ENCODE measurements at regions of chr6 and their contacts with region 1.

Region 1: GRCh38 chr6:79078075-79079025 is at the start of gene PHIP:
- DNase-seq: peak; percentile 85 to 97 (median 91)
- ATAC-seq: peak; percentile 82
- H3K4me3 ChIP-seq: peak within 1 kb of the TSS; percentile 80
- H3K4me3 Mint-ChIP-seq: peak within 1 kb of the TSS; percentile 95
- H3K27ac ChIP-seq: peak within 1 kb of the TSS; percentile 93 to 98
- H3K27ac Mint-ChIP-seq: peak within 1 kb of the TSS; percentile 98
- H3K4me1 ChIP-seq: peaks cover 2% of the 10 kb centered on the region
- H3K4me1 Mint-ChIP-seq: peaks cover 53% of the 10 kb centered on the region
- H3K27me3 ChIP-seq: peaks cover 0 to 5% of the 10 kb centered on the region in 2 experiments
- H3K27me3 Mint-ChIP-seq: peaks cover 8% of the 10 kb centered on the region
- CTCF ChIP-seq: no peak
- total RNA-seq, gene PHIP: 35.7 to 36.9 TPM

Region 2: GRCh38 chr6:77535172-77535571 is 1543.2 kb before region 1 on chr6:
- CTCF ChIA-PET with region 1: no interaction called
- POLR2A ChIA-PET with region 1: no interaction called
- intact Hi-C with region 1: no loop called
- DNase-seq: no peak
- ATAC-seq: no peak
- H3K4me3 ChIP-seq: no peak overlapping the region
- H3K4me3 Mint-ChIP-seq: no peak overlapping the region
- H3K27ac ChIP-seq: no peak overlapping the region
- H3K27ac Mint-ChIP-seq: no peak overlapping the region
- H3K4me1 ChIP-seq: no peaks in the 10 kb centered on the region
- H3K4me1 Mint-ChIP-seq: no peaks in the 10 kb centered on the region
- H3K27me3 ChIP-seq: no peaks in the 10 kb centered on the region
- H3K27me3 Mint-ChIP-seq: no peaks in the 10 kb centered on the region
- CTCF ChIP-seq: no peak

Region 3: DNA sequence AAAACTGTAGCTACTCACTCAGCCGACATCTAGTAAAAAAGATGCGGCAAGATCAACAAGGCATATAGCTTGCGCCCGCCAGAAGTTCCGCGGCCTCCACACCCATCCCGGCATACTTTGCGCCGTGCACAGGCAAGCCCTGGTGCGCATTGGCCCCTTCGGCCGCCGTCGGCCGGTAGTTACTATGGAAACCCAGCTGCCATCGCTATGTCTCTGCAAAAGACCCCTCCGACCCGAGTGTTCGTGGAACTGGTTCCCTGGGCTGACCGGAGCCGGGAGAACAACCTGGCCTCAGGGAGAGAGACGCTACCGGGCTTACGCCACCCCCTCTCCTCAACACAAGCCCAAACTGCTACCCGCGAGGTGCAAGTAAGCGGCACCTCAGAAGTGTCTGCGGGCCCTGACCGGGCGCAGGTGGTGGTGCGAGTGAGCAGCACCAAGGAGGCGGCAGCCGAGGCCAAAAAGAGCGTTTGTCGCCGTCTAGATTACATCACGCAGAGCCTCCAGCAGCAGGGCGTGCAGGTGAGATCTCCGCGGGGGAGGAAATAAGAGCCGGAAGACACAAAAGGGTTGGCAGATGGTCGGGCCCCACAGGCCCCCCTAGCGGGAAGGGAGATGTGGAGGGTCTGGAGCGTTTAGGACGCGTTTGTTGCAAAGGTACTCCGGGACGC is 210.8 kb before region 1 on chr6 and contains the start of gene IRAK1BP1:
- CTCF ChIA-PET with region 1: no interaction called
- POLR2A ChIA-PET with region 1: interaction called, 6 read pairs
- intact Hi-C with region 1: loop called in 1 of 2 experiments (anchors 5 kb)
- DNase-seq: peak; percentile 56 to 84 (median 69)
- ATAC-seq: peak; percentile 90
- H3K4me3 ChIP-seq: peak within 1 kb of the TSS; percentile 82
- H3K4me3 Mint-ChIP-seq: peak within 1 kb of the TSS; percentile 98
- H3K27ac ChIP-seq: peak within 1 kb of the TSS; percentile 42 to 67
- H3K27ac Mint-ChIP-seq: peak within 1 kb of the TSS; percentile 91
- H3K4me1 ChIP-seq: peaks cover 5% of the 10 kb centered on the region
- H3K4me1 Mint-ChIP-seq: peaks cover 23% of the 10 kb centered on the region
- H3K27me3 ChIP-seq: no peaks in the 10 kb centered on the region
- H3K27me3 Mint-ChIP-seq: no peaks in the 10 kb centered on the region
- CTCF ChIP-seq: no peak
- total RNA-seq, gene IRAK1BP1: 0.52 to 0.98 TPM

Region 4: DNA sequence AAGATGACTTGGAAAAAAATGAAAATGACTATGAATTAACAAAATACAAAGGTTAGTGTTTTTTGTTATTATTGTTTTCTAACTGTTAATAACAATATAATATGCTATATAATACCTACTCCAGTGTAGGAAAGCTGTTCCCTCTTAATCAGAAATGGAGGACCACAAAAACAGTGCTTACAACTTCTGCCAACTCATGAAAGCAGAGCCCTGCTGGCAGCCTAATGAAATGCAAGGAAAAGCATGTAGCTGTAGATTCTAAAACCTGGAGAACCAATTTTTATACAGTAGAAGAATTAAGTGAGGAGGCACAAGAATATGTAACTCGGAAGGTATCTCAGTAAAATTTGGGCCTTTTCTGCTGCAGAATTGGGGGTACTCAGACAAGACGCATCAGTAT is 29.7 kb before region 1 on chr6:
- CTCF ChIA-PET with region 1: interaction called, 6 read pairs
- POLR2A ChIA-PET with region 1: interaction called, 25 read pairs
- intact Hi-C with region 1: loop called (anchors 5 kb)
- DNase-seq: peak in 4 of 14 experiments; percentile 10 to 38 (median 26)
- ATAC-seq: peak; percentile 51
- H3K4me3 ChIP-seq: no peak overlapping the region
- H3K4me3 Mint-ChIP-seq: no peak overlapping the region
- H3K27ac ChIP-seq: no peak overlapping the region
- H3K27ac Mint-ChIP-seq: no peak overlapping the region
- H3K4me1 ChIP-seq: peaks cover 4% of the 10 kb centered on the region
- H3K4me1 Mint-ChIP-seq: peaks cover 61% of the 10 kb centered on the region
- H3K27me3 ChIP-seq: no peaks in the 10 kb centered on the region
- H3K27me3 Mint-ChIP-seq: no peaks in the 10 kb centered on the region
- CTCF ChIP-seq: peak; percentile 60

Region 5: DNA sequence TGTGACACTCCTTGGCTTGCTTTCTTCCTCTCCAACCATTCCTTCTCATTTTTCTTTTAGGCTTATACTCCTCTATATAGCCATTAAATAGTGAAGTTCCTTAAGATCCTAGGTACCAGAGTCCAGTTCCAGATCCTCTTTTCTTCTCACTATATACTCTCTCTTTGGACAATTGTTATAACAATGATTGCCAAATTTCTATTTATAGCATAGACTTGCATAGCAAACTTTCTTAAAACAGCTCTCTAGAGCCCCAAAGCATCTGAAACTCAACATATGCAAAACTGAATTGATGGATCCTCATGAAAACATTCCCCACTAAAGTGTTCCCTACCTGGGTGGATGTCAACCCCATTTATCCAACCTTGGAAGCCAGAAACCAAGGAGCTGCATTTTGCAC is 13.7 kb before region 1 on chr6:
- CTCF ChIA-PET with region 1: no interaction called
- POLR2A ChIA-PET with region 1: interaction called, 22 read pairs
- intact Hi-C with region 1: no loop called
- DNase-seq: no peak
- ATAC-seq: no peak
- H3K4me3 ChIP-seq: no peak overlapping the region
- H3K4me3 Mint-ChIP-seq: no peak overlapping the region
- H3K27ac ChIP-seq: no peak overlapping the region
- H3K27ac Mint-ChIP-seq: no peak overlapping the region
- H3K4me1 ChIP-seq: peaks cover 5% of the 10 kb centered on the region
- H3K4me1 Mint-ChIP-seq: peaks cover 21% of the 10 kb centered on the region
- H3K27me3 ChIP-seq: no peaks in the 10 kb centered on the region
- H3K27me3 Mint-ChIP-seq: no peaks in the 10 kb centered on the region
- CTCF ChIP-seq: no peak

Region 6: DNA sequence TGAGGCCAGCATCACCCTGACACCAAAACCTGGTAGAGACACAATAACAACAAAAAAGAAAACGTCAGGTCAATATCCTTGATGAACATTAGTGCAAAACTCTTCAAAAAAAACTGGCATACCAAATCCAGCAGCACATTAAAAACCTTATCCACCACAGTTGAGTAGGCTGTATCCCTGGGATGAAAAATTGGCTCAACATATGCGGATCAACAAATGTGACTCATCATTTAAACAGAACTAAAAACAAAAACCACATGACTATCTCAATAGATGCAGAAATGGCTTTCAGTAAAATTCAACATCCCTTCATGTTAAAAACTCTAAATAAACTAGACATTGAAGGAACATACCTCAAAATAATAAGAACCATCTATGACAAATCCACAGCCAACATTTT is 59.3 kb after region 1 on chr6:
- CTCF ChIA-PET with region 1: no interaction called
- POLR2A ChIA-PET with region 1: no interaction called
- intact Hi-C with region 1: no loop called
- DNase-seq: no peak
- ATAC-seq: no peak
- H3K4me3 ChIP-seq: no peak overlapping the region
- H3K4me3 Mint-ChIP-seq: no peak overlapping the region
- H3K27ac ChIP-seq: no peak overlapping the region
- H3K27ac Mint-ChIP-seq: no peak overlapping the region
- H3K4me1 ChIP-seq: no peaks in the 10 kb centered on the region
- H3K4me1 Mint-ChIP-seq: no peaks in the 10 kb centered on the region
- H3K27me3 ChIP-seq: peaks cover 3 to 10% of the 10 kb centered on the region in 2 experiments
- H3K27me3 Mint-ChIP-seq: peaks cover 22% of the 10 kb centered on the region
- CTCF ChIP-seq: no peak

Region 7: DNA sequence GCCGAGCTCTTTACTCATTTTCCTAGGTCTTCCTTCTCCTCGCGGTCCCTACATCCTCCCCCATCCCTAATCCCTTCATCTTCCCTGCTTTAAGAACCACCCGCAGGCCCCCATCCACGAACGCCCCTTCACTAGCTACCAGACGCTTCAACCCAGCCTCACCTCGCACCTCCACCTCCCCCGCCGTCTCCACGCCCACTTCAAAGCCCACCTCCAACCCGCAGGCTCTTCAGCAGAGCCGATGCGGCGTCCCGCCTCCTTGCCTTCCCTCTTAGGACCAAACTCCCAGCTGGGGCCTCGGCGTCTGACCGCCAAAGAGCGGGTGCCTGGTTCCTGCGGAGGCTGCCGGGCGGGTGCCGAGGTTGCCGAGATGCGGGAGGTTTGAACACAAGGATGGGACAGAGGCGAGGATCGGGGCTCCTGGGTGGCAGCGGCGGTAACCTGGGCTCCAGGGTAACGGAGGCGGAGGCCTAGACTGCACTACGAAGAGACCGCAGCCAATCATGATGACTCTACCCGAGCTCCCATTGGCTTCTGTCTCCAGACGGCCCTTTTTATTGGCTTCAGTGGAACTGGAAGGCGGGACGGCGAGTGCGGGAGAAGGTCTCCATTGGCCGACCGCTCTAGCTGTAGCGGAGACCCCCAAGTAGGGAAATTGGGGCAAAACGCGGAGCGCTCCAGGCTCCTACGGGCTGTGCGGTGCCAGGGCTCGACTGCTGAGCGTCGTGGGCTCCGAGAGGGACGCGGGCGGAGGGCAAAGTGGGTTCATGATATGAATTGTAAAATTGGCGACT is 458.8 kb after region 1 on chr6 and contains the start of gene LCA5:
- CTCF ChIA-PET with region 1: no interaction called
- POLR2A ChIA-PET with region 1: interaction called, 10 read pairs
- intact Hi-C with region 1: loop called (anchors 5 to 10 kb)
- DNase-seq: peak; percentile 60 to 91 (median 76)
- ATAC-seq: peak; percentile 96
- H3K4me3 ChIP-seq: peak within 1 kb of the TSS; percentile 74
- H3K4me3 Mint-ChIP-seq: no peak within 1 kb of the TSS
- H3K27ac ChIP-seq: no peak within 1 kb of the TSS
- H3K27ac Mint-ChIP-seq: no peak within 1 kb of the TSS
- H3K4me1 ChIP-seq: peaks cover 16% of the 10 kb centered on the region
- H3K4me1 Mint-ChIP-seq: no peaks in the 10 kb centered on the region
- H3K27me3 ChIP-seq: peaks cover 0 to 17% of the 10 kb centered on the region in 2 experiments
- H3K27me3 Mint-ChIP-seq: peaks cover 10% of the 10 kb centered on the region
- CTCF ChIP-seq: no peak
- total RNA-seq, gene LCA5: not detected

Region 8: DNA sequence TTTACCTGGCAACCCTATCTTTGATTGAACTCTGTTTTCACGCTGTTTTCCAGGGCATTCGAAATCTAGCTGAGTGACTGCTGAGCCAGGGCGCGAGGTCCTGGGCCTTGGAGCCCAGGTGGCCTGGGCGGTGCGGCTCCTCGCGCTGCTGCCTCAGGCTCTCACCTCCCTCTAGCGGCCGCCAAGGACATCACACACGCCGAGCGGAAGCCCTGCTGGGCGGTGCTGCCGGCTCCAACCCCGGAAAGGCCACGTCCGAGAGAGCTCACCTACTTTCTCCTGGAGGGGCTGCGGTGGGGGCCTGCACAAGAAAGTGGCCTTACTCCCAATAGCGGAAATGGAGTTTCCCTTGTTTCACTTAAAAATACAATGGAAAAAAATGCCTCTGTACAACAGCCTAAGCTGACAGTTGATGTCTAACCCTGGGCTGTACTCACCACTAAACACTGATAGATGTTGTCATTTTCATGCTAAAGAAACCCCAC is 791.3 kb after region 1 on chr6:
- CTCF ChIA-PET with region 1: no interaction called
- POLR2A ChIA-PET with region 1: no interaction called
- intact Hi-C with region 1: no loop called
- DNase-seq: peak; percentile 60 to 88 (median 68)
- ATAC-seq: peak; percentile 99
- H3K4me3 ChIP-seq: peak overlapping the region; percentile 19
- H3K4me3 Mint-ChIP-seq: peak overlapping the region; percentile 35
- H3K27ac ChIP-seq: no peak overlapping the region
- H3K27ac Mint-ChIP-seq: no peak overlapping the region
- H3K4me1 ChIP-seq: peaks cover 9% of the 10 kb centered on the region
- H3K4me1 Mint-ChIP-seq: peaks cover 15% of the 10 kb centered on the region
- H3K27me3 ChIP-seq: peaks cover 0 to 6% of the 10 kb centered on the region in 2 experiments
- H3K27me3 Mint-ChIP-seq: peaks cover 14% of the 10 kb centered on the region
- CTCF ChIP-seq: peak; percentile 97

Region 9: DNA sequence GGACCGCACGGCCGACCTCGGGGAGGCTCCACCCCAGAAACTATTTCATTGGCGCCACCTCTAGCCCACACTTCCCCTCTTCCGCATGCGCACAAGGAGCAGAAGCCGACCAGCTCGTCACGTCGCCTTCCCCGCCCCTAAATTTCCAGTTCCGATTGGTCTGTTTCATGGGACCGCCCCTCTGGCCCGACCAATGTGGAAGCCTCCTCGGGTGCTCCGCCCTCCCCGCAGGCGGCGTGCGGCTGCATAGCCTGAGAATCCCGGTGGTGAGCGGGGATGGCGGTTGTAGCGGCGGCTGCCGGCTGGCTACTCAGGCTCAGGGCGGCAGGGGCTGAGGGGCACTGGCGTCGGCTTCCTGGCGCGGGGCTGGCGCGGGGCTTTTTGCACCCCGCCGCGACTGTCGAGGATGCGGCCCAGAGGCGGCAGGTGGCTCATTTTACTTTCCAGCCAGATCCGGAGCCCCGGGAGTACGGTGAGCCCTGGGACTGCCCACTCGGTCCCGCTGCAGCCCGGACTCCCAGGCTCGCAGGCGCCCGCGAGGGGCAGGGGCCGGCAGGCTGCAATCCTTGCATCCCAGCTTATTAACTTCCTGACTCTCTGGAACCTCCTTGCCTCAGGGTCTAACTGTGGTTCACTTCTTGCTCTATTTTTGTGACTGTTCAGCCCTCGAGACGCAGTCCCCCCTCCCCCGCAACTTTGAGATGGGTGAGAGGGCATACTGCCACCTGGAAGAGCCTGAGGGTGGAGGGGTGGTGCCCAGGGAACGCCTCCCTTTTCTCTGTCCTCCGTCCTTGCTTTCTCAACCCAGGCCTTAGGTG is 1028.3 kb after region 1 on chr6 and contains the start of gene BCKDHB:
- CTCF ChIA-PET with region 1: no interaction called
- POLR2A ChIA-PET with region 1: interaction called, 3 read pairs
- intact Hi-C with region 1: loop called in 1 of 2 experiments (anchors 10 kb)
- DNase-seq: peak; percentile 94 to 99 (median 96)
- ATAC-seq: peak; percentile 97
- H3K4me3 ChIP-seq: peak within 1 kb of the TSS; percentile 80
- H3K4me3 Mint-ChIP-seq: peak within 1 kb of the TSS; percentile 93
- H3K27ac ChIP-seq: peak within 1 kb of the TSS; percentile 23 to 30
- H3K27ac Mint-ChIP-seq: peak within 1 kb of the TSS; percentile 80
- H3K4me1 ChIP-seq: peaks cover 9% of the 10 kb centered on the region
- H3K4me1 Mint-ChIP-seq: peaks cover 36% of the 10 kb centered on the region
- H3K27me3 ChIP-seq: no peaks in the 10 kb centered on the region
- H3K27me3 Mint-ChIP-seq: peaks cover 14% of the 10 kb centered on the region
- CTCF ChIP-seq: no peak
- total RNA-seq, gene BCKDHB: 7.8 to 8.1 TPM

Measured in CD4-positive, alpha-beta T cell (primary cell).